GM18951 (cell line): ENCODE measurements at regions of chr22 and their contacts with region 1.

Region 1: DNA sequence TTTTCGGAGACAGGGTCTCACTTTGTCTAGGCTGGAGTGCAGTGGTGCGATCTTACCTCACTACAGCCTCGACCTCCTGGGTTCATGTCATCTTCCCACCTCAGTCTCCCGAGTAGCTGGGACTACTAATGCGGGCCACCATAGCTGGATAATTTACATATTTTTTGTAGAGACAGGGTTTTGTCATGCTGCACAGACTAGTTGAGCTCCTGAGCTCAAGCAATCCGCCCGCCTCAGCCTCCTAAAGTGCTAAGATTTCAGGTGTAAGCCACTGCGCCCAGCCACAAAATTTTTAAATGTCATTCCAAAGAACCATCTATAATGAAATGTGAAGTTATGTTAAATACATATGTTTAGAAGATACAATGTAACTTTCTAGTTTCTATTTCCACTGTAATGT is 4747.7 kb upstream of the OR11H1 start:
- POLR2A ChIP-seq: no peak

Region 2: GRCh38 chr22:11042116-11042515 is 261.8 kb after region 1 on chr22:
- in situ Hi-C with region 1: no loop called
- POLR2A ChIP-seq: no peak

Region 3: DNA sequence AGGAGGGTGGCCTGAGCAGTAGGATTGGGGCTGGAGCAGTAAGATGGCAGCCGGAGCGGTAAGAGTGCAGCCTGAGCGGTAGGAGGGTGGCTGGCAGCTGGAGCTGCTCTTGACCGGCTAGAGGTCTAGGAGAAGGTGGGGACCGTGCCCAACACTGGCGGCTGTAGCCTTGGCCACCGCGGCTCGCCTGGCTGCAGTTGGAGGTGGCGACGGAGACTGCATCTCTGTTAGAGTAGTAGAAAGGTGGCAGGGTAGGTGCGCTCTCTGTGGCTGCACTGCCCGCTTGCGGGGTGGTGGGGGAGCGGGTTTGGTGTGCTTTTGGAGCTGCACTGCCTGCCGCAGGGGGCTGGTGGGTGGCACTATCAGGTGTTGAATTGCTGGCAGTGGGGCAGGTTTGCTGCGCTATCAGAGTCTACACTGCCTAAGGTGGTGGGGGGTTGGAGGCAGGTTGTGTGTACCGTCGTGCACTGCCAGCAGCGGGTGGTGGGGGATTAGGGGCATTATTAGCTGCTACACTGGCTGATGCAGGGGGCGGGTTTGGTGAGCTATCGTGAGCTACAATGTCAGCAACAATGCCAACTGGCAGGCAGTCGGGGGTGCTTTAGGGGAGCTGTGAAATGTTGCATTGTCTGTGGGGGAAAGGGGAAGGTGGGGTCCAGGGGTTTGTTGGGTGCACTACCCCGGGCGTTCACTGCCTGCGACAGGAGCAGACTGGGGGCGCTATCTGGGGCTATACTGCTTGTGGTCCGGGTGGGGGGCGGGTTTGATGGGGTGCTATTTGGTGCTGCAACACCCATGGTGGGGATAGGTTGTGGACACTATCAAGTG is 286.4 kb after region 1 on chr22:
- in situ Hi-C with region 1: loop called (anchors 5 kb)
- POLR2A ChIP-seq: no peak